HAP-1 (cell line): ENCODE measurements at regions of chr11 and their contacts with region 1.

Region 1: GRCh38 chr11:70608568-70609470 is 210.5 kb downstream of the CTTN start:
- DNase-seq: no peak
- H3K4me3 ChIP-seq: no peak overlapping the region
- H3K4me1 ChIP-seq: no peaks in the 10 kb centered on the region
- H3K27me3 ChIP-seq: peaks cover 5% of the 10 kb centered on the region; the same call in 1 of the 2 replicates

Region 2: DNA sequence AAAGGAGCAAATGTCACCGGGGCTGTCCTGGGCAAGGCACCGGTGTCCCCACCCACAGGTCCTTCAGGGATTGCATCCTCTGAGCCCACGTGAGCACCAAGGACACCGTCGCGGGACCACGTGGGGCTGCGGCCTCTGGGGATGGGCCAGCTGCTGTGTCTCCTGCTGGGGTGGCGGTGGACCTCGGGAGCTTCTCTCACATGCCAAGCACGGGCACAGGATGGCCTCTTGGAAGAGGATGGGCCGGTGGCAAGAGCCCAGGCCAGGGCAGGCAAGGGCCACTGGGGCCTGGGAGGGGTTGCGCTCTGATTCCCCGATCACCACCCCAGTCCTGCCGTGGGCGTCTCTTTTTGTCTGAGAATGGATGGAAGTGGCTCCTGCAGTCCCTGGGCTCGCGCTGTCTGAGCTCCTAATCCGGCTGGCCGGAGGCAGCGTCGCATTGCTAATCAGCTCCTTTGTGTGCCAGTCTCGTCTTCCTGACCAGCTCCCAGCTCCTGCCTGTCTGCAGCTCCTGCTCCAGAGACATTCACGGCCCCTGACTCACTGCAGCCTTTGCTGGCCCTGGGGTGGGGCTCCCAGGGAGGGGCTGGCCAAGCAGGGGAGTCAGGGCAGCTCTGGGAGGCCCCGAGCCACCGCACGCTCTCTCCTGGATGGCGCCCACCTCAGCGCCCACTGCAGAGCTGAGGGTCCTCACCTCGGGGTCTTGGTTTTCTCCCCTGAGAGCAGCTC is 63.8 kb before region 1 on chr11:
- in situ Hi-C with region 1: no loop called
- DNase-seq: no peak
- H3K4me3 ChIP-seq: no peak overlapping the region
- H3K4me1 ChIP-seq: no peaks in the 10 kb centered on the region
- H3K27me3 ChIP-seq: no peaks in the 10 kb centered on the region

Region 3: GRCh38 chr11:70699294-70700221 is 90.7 kb after region 1 on chr11:
- in situ Hi-C with region 1: loop called (anchors 25 kb)
- DNase-seq: no peak
- H3K4me3 ChIP-seq: no peak overlapping the region
- H3K4me1 ChIP-seq: no peaks in the 10 kb centered on the region
- H3K27me3 ChIP-seq: no peaks in the 10 kb centered on the region

Region 4: DNA sequence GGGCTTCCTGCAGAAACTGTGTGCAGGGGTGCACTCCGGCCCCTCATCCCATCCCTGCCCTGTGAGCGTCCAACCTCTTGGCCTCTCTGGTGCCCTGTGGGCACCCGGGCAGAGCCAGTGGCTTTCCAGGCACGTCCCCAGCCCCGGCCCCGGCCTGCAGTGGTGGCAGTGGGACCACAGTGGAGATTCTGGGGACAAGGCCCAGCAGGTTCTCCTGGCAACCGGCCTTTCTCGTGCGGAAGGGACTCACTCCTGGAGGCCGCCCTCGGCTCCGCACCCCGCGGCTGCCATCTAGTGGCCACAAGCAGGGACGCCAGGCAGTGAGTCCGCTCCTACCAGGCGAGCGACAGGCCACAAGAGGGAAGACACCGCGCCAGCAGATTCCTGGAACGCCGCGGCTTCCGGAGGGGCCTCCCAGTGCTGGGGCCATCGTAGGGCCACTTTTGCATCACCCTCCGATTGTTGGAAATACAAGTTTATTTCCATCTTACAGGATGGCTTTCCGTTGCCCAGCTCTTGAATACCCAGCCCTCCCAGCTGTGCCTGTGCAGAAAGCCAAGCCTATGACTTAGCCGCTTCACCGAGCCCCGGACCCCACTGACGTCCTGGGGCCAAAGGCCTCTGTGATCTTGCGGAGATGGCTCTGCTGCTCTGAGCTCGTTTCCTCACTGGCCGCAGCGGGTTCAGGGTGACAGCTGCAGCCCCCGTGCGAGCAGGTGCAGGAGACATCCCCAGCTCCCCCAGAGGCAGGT is 146.8 kb after region 1 on chr11:
- in situ Hi-C with region 1: no loop called
- DNase-seq: peak; percentile 41 to 83
- H3K4me3 ChIP-seq: no peak overlapping the region
- H3K4me1 ChIP-seq: no peaks in the 10 kb centered on the region
- H3K27me3 ChIP-seq: no peaks in the 10 kb centered on the region